ENCODE measurements at regions of chr14 and their contacts with region 1.

Region 1: GRCh38 chr14:60184146-60184904 is 19.1 kb upstream of the DHRS7 start:
- DNase-seq: peak; percentile 22
- H3K4me3 Mint-ChIP-seq: peak overlapping the region; percentile 62
- H3K27ac Mint-ChIP-seq: peak overlapping the region; percentile 89
- H3K4me1 Mint-ChIP-seq: peaks cover 19% of the 10 kb centered on the region
- H3K27me3 Mint-ChIP-seq: no peaks in the 10 kb centered on the region

Region 2: GRCh38 chr14:59126710-59127432 is 1057.5 kb before region 1 on chr14:
- CTCF ChIA-PET with region 1: no interaction called
- intact Hi-C with region 1: loop called (anchors 1 kb)
- DNase-seq: peak; percentile 24
- H3K4me3 Mint-ChIP-seq: no peak overlapping the region
- H3K27ac Mint-ChIP-seq: no peak overlapping the region
- H3K4me1 Mint-ChIP-seq: no peaks in the 10 kb centered on the region
- H3K27me3 Mint-ChIP-seq: peaks cover 7% of the 10 kb centered on the region

Region 3: DNA sequence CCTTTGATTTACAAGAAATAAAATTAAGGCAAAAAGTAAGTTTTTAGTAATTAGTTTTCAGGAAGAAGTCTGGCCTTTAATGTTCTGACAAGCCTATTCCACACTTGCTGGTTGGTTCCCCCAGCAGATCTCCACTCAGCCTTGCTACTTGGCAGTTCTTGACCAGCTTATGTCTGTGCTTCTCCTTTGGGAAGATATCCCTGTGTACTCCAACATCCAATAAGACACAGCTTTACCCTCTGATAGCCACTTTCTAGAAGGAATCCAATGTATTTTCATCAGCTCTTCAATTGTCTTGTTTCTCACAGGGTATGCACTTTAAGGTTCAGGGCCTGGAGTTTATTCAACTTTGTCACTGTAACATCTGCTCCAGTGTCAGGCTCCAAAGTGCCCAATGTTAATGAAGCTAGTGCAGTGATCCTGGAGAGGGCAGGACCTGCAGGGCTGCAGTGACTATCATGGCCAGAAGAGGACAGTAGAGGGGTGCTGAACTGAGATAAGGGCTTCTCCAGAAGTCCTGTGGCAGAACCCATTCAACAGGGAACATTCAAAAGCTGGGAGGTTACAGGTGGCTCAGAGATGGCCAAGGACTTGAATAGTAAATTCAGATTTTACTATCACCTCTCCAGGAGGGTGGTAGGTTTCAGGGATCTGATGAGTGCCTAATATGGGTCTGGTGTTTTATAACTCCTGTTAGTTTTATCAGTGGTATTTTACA is 677.1 kb before region 1 on chr14:
- CTCF ChIA-PET with region 1: interaction called, 6 read pairs
- intact Hi-C with region 1: loop called (anchors 2 kb)
- DNase-seq: peak; percentile 74
- H3K4me3 Mint-ChIP-seq: no peak overlapping the region
- H3K27ac Mint-ChIP-seq: no peak overlapping the region
- H3K4me1 Mint-ChIP-seq: peaks cover 7% of the 10 kb centered on the region
- H3K27me3 Mint-ChIP-seq: peaks cover 5% of the 10 kb centered on the region

Region 4: DNA sequence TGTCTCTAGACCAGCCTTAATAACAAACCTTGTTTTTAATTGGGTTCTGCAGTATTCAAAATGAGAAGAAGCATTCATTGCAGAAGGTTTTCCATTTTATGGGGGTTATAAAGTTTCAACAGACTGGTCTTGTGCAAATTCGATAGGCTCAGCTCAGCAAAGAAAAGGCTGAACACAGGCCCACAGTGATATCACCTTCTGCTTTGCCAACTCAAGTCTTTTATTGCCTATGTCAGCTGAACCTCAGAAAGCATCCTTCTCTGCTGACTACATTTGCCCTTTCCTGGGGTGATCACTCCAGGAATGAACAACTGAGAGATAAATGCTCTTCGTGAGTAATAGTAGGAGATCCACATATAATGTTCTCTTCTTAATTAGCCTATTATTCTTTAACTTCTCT is 473.2 kb before region 1 on chr14:
- CTCF ChIA-PET with region 1: no interaction called
- intact Hi-C with region 1: loop called (anchors 10 kb)
- DNase-seq: no peak
- H3K4me3 Mint-ChIP-seq: no peak overlapping the region
- H3K27ac Mint-ChIP-seq: no peak overlapping the region
- H3K4me1 Mint-ChIP-seq: no peaks in the 10 kb centered on the region
- H3K27me3 Mint-ChIP-seq: peaks cover 4% of the 10 kb centered on the region

Region 5: DNA sequence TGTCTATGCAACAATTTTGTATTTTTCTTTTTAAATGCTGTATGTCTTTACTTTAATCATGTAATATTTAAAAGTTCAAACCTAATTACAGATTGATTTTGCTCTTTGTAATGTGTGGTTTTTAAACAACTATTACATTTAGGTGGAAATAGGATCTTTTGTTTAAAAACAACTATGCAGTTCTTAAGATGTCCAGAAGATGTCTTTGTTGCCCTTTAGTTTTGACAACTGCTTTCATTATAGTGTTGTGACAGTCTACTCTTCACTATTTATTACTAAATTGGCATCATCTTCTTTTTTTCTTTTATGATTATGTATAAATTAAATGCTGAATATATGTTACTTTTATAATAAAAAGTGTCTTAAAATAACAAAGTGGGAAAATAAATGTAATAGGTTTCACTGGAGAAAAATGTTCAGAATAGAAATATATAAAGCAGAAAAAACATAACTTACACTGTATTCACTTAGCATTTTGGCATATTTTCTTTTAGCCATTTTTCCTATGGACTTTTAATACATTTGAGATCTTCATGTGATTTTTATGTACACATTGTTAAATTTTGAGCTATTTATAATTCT is 119.7 kb before region 1 on chr14:
- CTCF ChIA-PET with region 1: interaction called, 32 read pairs
- intact Hi-C with region 1: loop called (anchors 1 kb)
- DNase-seq: no peak
- H3K4me3 Mint-ChIP-seq: no peak overlapping the region
- H3K27ac Mint-ChIP-seq: no peak overlapping the region
- H3K4me1 Mint-ChIP-seq: no peaks in the 10 kb centered on the region
- H3K27me3 Mint-ChIP-seq: peaks cover 1% of the 10 kb centered on the region

Region 6: DNA sequence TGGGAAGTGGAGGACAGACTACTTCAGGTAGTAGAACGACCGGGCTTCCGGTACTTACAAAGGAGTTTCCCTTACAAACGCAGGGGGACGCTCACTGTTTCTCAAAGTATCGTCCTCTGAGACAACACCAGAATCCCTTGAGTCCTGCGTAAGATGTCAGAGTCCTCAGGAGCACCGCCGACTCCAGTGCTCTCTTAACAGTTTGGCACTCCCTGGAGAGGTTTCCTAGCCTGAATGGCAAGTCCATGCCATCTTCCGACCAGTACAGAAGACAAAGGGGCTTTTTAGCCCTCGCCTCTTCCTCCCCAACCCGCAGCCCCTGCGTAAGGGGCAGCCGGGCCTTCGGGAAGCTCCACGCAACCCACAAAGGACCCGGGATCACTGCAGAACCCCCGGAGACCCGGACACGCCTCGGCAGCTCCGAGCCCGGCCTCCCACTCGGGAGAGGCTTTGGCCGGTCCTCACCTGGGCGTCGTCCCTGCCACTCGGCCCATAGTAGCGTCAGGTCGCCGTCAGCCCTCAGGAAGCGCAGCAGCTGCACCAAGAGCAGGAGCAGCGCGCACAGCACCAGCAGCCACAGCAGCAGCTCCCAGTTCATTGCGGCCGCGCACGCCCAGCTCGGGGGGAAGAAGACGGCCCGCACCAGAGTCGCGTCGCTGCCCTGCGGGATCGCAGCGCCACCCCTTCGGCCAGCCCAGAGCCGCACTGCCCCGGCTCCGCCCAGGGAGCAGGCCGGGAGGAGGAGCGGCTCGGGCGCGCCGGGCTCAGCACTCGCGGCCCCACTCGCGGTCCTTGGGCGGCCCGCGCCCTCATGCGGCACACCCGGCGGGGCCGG is 19.4 kb before region 1 on chr14 and contains the start of gene DHRS7:
- CTCF ChIA-PET with region 1: interaction called, 31 read pairs
- intact Hi-C with region 1: loop called (anchors 1 kb)
- DNase-seq: peak; percentile 65
- H3K4me3 Mint-ChIP-seq: peak within 1 kb of the TSS; percentile 89
- H3K27ac Mint-ChIP-seq: peak within 1 kb of the TSS; percentile 96
- H3K4me1 Mint-ChIP-seq: peaks cover 39% of the 10 kb centered on the region
- H3K27me3 Mint-ChIP-seq: no peaks in the 10 kb centered on the region
- total RNA-seq, gene DHRS7: 40.5 to 43.4 TPM

Region 7: GRCh38 chr14:60294411-60295069 is 110.2 kb after region 1 on chr14:
- CTCF ChIA-PET with region 1: no interaction called
- intact Hi-C with region 1: no loop called
- DNase-seq: no peak
- H3K4me3 Mint-ChIP-seq: no peak overlapping the region
- H3K27ac Mint-ChIP-seq: no peak overlapping the region
- H3K4me1 Mint-ChIP-seq: no peaks in the 10 kb centered on the region
- H3K27me3 Mint-ChIP-seq: no peaks in the 10 kb centered on the region

Region 8: DNA sequence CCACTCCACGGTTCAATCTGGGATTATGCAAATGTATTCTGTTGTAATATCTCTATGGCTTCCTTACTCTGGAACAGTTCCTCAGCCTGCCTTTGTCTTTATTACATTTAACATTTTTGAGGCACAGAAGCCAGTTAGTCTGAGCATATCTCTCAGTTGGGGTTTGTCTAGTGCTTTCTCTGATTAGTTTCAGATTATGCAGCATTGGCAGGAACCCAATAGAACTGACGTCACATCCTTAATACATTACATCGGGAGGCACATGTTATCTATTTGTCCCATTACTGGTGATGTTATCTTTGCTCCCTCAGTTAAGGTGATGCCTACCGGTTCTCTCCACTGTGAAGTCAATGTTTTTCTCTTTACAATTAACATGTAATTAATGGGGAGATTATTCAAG is 127.1 kb after region 1 on chr14:
- CTCF ChIA-PET with region 1: no interaction called
- intact Hi-C with region 1: no loop called
- DNase-seq: no peak
- H3K4me3 Mint-ChIP-seq: no peak overlapping the region
- H3K27ac Mint-ChIP-seq: no peak overlapping the region
- H3K4me1 Mint-ChIP-seq: no peaks in the 10 kb centered on the region
- H3K27me3 Mint-ChIP-seq: peaks cover 14% of the 10 kb centered on the region

Region 9: DNA sequence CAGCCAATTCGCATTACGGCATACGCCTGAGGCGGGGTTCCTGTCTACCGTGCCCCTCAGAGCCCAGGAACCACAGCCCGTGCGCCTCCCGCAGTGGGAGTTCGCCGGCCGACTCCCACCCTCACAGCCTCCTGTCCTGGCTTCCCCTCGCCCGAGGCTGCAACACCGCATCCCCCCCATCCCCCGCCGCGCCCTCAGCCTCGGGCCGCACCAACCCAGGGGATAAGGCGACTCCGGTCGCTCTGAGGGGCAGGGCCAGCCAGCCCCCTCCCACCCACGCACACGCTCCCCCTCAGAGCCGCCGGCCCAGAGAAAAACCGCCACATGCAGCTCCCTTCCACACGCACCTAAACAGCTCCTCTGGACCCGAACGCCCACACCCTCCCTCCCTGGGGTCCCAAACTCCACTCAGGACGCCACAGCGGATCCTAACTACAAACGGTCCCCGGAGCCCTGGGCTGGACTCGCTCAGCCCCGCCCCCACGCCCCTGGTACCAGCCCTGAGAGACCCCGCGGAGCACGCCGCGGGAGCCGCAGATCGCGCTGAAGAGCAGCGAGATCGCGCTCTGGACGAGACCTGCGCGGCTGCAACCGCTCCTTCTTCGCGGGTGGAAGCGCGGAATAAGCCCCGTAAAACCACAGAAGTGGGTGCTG is 301.4 kb after region 1 on chr14 and contains the start of gene C14orf39:
- CTCF ChIA-PET with region 1: no interaction called
- intact Hi-C with region 1: no loop called
- DNase-seq: peak; percentile 21
- H3K4me3 Mint-ChIP-seq: no peak within 1 kb of the TSS
- H3K27ac Mint-ChIP-seq: no peak within 1 kb of the TSS
- H3K4me1 Mint-ChIP-seq: peaks cover 2% of the 10 kb centered on the region
- H3K27me3 Mint-ChIP-seq: peaks cover 27% of the 10 kb centered on the region
- total RNA-seq, gene C14orf39: not detected

Region 10: DNA sequence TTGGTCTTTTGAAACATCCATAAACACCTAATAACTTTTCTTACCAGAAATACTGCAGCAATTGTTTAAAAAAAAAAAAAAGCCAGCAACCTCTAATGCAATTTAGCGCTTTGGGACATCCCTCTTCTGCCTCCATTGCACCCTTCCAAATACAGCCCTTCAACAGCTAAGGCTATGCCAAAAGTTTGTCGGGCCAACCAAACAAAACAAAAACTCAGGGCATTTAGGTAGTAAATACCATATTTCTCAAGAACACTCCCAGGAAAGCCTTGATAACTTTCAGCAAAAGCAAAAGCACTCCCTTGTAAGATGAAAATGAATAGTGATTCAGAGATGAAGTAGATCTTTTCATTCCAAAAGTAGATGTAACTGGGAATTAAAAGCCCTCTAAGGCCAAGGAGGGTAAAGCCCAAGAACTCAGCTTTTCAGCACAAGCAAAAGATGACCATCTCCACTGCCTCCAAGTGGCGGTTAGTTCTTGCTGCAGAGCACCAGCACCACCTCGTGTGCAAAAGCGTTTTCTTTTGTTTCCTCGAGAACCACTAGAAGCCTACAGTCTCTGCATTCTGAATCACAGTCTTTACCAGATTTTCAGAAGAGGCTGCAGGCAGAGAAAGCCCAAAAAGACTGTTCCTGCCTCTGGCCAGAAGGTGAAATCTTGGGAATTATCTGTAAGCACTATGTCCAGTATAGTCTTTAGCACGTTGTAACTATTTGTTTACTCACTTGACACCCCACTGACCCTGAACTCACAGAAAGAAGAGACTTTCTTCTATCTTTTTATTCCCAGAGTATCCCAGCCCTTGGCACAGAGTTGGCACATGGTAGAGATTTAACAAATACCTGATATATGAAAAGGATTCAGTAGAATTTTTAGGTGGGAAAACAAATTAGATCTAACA is 377.8 kb after region 1 on chr14:
- CTCF ChIA-PET with region 1: no interaction called
- intact Hi-C with region 1: loop called (anchors 1 kb)
- DNase-seq: peak; percentile 59
- H3K4me3 Mint-ChIP-seq: no peak overlapping the region
- H3K27ac Mint-ChIP-seq: no peak overlapping the region
- H3K4me1 Mint-ChIP-seq: no peaks in the 10 kb centered on the region
- H3K27me3 Mint-ChIP-seq: no peaks in the 10 kb centered on the region